ENCODE measurements at regions of chr5 and their contacts with region 1.

Region 1: GRCh38 chr5:80093796-80094195 is 58.6 kb downstream of the THBS4 start:
- DNase-seq: peak; percentile 7

Region 2: DNA sequence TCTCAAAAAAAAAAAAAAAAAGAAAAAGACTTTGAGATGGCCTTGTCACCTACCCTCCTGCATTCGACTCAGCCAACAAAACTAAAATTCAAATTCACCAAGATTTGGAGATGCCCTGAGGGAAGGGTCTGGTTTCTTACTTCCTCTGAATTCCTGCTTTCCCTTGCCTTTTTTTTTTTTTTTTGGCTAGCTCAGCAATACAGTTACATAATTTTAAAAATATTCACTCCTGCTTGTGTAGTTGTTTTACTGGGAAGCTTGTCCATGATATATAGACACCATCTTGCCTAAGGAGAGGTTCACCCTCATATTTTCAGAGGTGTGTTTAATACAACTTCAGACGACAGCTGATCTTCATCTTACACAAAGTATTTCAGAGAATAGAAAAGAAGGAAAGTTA is 183.4 kb after region 1 on chr5:
- intact Hi-C with region 1: loop called (anchors 2 kb)
- DNase-seq: no peak

Region 3: DNA sequence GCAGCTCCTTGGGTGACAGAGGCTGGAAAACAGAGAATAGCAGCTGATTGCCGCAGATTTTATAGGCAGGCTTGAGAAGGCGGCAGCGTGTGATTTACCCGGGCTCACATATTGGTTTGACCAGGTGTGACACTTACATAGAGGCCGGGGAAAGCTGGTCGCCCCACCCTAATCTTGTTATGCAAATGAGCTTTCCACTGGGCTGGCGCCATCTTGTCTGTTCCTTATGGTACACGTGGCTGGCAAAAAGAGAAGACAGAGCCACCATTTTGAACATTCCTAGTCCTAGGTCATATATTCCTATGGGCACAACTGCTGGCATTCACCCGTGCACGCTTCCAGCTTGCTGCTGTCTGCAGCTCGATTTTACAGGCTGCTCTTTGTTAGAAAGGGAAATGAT is 214.7 kb after region 1 on chr5:
- intact Hi-C with region 1: loop called (anchors 2 kb)
- DNase-seq: no peak

Region 4: GRCh38 chr5:80407735-80408482 is 314.1 kb after region 1 on chr5 and contains the start of gene ZFYVE16:
- intact Hi-C with region 1: loop called (anchors 5 kb)
- DNase-seq: peak; percentile 99
- total RNA-seq, gene ZFYVE16: 50.3 TPM

Measured in cardiac septum (tissue), 1 donor.